Activated CD4-positive, alpha-beta memory T cell treated with anti-CD3 and anti-CD28 coated beads for 36 hours (primary cell): ENCODE measurements at regions of chr5 and their contacts with region 1.

Region 1: GRCh38 chr5:62305715-62306322 is at the start of gene KIF2A:
- DNase-seq: peak; percentile 96
- H3K4me3 Mint-ChIP-seq: peak within 1 kb of the TSS; percentile 98
- H3K27ac Mint-ChIP-seq: peak within 1 kb of the TSS; percentile 98
- H3K4me1 Mint-ChIP-seq: peaks cover 48% of the 10 kb centered on the region
- H3K27me3 Mint-ChIP-seq: no peaks in the 10 kb centered on the region
- total RNA-seq, gene KIF2A: 209 TPM

Region 2: DNA sequence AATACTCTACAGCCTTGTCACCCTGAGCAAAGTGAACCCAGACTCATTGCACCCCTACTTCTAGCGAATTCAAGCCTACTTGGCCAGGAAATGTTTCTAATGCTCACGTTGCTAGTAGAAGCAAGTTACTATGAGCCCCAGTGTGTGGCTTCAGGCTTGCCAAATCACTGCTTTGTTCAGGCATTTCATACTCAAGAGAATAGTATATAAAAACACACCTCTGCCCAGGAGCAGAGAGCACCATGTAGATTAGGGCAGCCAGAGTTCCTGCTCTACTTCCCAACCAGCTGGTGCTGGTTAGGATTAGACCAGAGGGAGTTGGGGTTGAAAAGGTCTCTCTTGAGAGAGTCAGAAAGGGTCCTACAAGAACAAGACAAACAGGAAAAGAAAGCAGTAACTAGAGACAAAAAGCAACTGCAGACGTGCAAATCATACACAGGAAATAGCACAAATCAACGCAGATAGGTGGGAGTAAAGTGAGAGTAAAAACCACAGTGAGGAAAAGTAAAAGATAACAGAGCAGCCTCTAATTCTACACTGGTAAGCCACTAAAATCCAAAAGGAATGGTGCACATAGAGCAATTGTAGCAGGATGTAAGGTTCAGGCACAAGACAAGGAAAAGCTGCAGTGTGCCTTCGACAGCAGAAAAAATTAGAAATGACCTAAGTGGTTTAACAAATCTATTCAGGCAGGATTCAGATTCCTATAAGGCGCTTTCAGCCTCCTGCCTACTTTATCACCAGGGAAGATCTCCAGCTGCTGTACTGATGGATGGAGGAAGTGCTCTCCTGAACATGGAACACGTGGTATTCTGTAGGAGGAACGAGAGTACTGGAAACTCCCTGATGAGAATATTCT is 49.4 kb before region 1 on chr5:
- CTCF ChIA-PET with region 1: interaction called, 4 read pairs
- POLR2A ChIA-PET with region 1: interaction called, 4 read pairs
- intact Hi-C with region 1: loop called (anchors 2 kb)
- DNase-seq: peak; percentile 26
- H3K4me3 Mint-ChIP-seq: peak overlapping the region; percentile 17
- H3K27ac Mint-ChIP-seq: peak overlapping the region; percentile 74
- H3K4me1 Mint-ChIP-seq: peaks cover 54% of the 10 kb centered on the region
- H3K27me3 Mint-ChIP-seq: no peaks in the 10 kb centered on the region

Region 3: GRCh38 chr5:62328772-62329491 is 23.1 kb after region 1 on chr5:
- CTCF ChIA-PET with region 1: interaction called, 3 read pairs
- POLR2A ChIA-PET with region 1: interaction called, 6 read pairs
- intact Hi-C with region 1: loop called (anchors 2 kb)
- DNase-seq: no peak
- H3K4me3 Mint-ChIP-seq: no peak overlapping the region
- H3K27ac Mint-ChIP-seq: peak overlapping the region; percentile 70
- H3K4me1 Mint-ChIP-seq: peaks cover 83% of the 10 kb centered on the region
- H3K27me3 Mint-ChIP-seq: no peaks in the 10 kb centered on the region

Region 4: DNA sequence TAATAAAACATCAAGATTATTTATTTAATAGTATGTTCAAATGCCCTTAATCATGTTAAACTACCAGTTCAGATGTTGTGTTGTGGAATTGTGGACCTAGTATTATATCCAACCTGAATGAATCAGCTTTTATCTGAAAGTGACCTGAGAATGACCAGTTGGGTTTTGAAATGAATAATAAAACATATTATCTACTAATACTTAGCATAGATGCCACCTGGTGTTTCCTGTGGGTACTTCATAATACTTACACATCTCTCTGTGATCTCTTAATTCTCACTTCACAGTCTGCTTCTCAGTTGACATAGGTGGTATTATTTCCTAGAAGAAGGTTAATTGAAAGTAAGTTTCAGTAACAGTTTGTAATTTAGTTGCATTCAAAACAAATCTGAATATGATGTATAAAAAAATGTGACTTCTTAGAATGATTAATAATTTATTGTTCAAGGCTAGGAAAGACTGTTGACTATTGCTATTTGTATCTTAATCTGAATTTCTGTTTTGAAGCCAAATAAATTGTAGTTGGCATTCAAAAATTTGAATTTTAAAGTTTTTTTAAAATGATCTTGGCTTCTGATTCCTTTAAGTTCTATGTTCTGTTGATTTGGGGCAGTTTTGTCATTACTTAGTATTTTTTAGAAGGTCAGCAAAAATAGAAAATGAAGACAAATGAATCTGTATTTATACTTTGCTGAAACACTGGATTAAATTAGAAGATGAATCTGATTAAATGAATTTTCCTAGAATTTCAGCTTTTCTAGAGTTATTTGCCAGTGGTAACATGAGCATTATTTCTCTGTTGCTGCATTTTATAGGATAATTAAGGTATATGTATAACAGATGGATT is 48.4 kb after region 1 on chr5:
- CTCF ChIA-PET with region 1: interaction called, 5 read pairs
- POLR2A ChIA-PET with region 1: interaction called, 4 read pairs
- intact Hi-C with region 1: loop called (anchors 1 kb)
- DNase-seq: no peak
- H3K4me3 Mint-ChIP-seq: no peak overlapping the region
- H3K27ac Mint-ChIP-seq: no peak overlapping the region
- H3K4me1 Mint-ChIP-seq: peaks cover 20% of the 10 kb centered on the region
- H3K27me3 Mint-ChIP-seq: no peaks in the 10 kb centered on the region

Region 5: GRCh38 chr5:62403434-62404250 is 97.8 kb after region 1 on chr5 and contains the start of gene DIMT1:
- CTCF ChIA-PET with region 1: interaction called, 12 read pairs
- POLR2A ChIA-PET with region 1: interaction called, 4 read pairs
- intact Hi-C with region 1: loop called (anchors 1 kb)
- DNase-seq: peak; percentile 97
- H3K4me3 Mint-ChIP-seq: peak within 1 kb of the TSS; percentile 100
- H3K27ac Mint-ChIP-seq: peak within 1 kb of the TSS; percentile 93
- H3K4me1 Mint-ChIP-seq: peaks cover 29% of the 10 kb centered on the region
- H3K27me3 Mint-ChIP-seq: no peaks in the 10 kb centered on the region
- total RNA-seq, gene DIMT1: 46.9 to 48.9 TPM